ENCODE measurements at regions of chr1 and their contacts with region 1.

Region 1: GRCh38 chr1:35564037-35564883 is 6.7 kb downstream of the NCDN start:
- DNase-seq: peak; percentile 66 to 93 (median 82)

Region 2: GRCh38 chr1:35451125-35451528 is 113.1 kb before region 1 on chr1:
- intact Hi-C with region 1: loop called (anchors 5 kb)
- DNase-seq: peak; percentile 68 to 95 (median 90)

Region 3: GRCh38 chr1:35715568-35716002 is 151.3 kb after region 1 on chr1:
- intact Hi-C with region 1: loop called (anchors 5 kb)
- DNase-seq: peak; percentile 59 to 93 (median 84)

Region 4: DNA sequence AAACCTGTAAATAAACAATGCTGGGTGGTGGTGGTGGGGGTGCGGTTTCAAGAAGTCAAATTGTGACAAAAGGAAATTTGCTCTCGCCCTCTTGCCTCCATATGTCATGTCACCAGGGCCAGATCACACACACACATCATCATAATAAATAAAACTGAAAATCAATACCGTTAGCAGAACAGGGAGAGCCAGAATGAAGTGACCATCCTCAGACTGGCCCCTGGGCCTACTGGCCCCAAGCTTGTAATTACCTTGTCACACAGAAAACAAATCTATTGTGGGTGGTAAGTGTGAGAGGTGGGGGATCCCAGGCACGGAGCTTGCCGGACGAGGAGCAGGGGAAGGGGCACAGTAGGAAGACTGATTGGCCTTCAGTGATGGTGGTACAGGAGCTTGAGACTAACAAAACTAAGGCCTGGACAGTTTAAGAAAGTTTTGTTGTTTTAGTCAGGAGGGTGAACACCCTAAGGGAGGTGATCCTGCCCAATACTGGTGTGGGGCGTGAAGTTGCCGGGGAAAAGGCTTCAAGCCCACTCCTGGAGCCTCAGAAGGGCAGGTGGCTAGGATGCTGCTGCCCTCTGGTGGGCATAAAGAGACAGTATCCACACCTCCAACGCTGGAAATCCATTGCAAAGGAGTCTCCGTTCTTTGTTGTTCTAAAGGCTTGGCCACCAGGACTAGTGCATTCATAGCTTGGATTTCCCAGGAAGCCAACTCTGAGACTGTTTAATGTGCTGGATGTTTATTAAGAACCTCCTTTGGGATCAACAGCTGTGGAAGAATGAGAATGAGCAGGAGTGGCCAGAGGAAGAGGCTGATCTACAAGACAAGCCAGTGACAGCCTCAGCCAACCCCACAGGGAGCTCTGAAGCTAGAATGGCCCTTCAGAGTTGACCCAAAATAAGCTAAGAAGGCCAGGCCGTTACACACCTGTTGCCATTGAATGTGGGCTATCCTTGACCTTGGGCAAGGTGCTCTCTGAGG is 162.5 kb after region 1 on chr1:
- intact Hi-C with region 1: loop called (anchors 2 kb)
- DNase-seq: peak; percentile 34 to 89 (median 70)

Measured in head of caudate nucleus (tissue), 42 donors.